ENCODE measurements at regions of chr15 and their contacts with region 1.

Region 1: DNA sequence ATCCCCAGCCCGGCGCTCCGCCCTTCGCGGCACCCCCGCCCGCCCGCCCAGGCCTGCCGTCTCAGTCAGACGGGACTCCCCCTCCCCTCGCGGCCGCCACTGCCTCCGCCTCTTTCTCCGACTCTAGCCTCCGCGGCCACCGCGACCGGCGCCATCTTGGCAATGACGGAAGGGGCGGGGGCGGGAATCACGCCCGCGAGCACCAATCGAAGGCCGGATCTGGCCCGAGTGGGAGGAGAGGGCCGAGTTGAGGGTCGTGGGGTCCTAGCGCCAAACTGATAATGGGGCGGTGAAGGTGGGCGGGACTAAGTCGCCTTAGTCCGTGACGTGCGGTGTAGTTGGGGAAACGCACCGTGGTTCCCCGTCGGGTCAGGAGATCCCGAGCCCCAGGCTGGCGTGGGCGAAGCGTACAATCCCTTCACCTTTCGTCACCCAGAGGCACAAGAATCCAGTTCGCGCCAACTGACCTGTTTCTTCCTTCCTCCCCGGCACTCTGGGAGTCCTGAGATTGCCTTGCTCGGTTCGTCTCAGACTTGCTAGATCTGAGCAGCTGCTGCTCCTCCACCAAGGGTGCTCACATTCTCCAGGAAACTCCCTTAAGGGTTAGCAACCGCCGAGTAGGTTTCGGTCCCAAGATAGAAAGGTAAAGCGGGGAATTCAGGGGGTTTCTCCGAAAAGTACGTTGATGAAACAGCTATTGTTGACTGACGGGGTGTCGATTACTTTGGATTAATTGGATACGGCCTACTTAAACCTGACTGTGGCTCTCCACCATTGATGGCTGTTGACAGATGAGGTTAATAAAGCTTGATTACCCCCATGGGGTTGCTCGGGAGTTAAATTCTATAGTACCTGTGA is at the start of gene DENND4A:
- DNase-seq: peak; percentile 86 to 97
- H3K4me3 ChIP-seq: peak within 1 kb of the TSS; percentile 86
- H3K27ac ChIP-seq: peak within 1 kb of the TSS; percentile 77
- H3K4me1 ChIP-seq: peaks cover 41% of the 10 kb centered on the region
- H3K27me3 ChIP-seq: no peaks in the 10 kb centered on the region
- CTCF ChIP-seq: no peak
- total RNA-seq, gene DENND4A: 12.6 and 16.3 TPM in 2 replicates

Region 2: DNA sequence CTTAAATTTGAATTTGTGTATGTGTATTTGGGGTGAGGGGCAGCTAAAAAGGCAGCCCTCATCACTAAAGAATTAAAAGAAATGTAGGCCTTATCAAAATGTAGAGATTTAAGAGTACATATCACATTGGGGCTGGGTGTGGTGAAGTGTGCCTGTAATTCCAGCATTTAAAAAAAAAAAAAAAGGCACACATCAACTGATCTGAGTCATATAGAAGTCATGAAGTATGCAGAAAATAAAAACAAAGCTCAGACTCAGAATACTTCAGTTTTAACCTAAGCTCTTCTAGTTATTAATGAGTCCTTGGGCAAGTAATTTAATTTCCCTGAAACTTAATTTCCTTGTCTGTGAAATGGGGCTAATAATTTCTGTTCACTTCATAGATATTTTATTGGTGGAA is 139.0 kb before region 1 on chr15:
- CTCF ChIA-PET with region 1: no interaction called
- POLR2A ChIA-PET with region 1: interaction called, 16 read pairs
- intact Hi-C with region 1: no loop called
- DNase-seq: peak in 1 of 2 experiments; percentile 39
- H3K4me3 ChIP-seq: no peak overlapping the region
- H3K27ac ChIP-seq: no peak overlapping the region
- H3K4me1 ChIP-seq: peaks cover 9% of the 10 kb centered on the region; the same call in 1 of the 2 replicates
- H3K27me3 ChIP-seq: no peaks in the 10 kb centered on the region
- CTCF ChIP-seq: no peak

Region 3: GRCh38 chr15:65757256-65757655 is 35.1 kb before region 1 on chr15:
- CTCF ChIA-PET with region 1: no interaction called
- POLR2A ChIA-PET with region 1: no interaction called
- intact Hi-C with region 1: no loop called
- DNase-seq: no peak
- H3K4me3 ChIP-seq: no peak overlapping the region
- H3K27ac ChIP-seq: no peak overlapping the region
- H3K4me1 ChIP-seq: no peaks in the 10 kb centered on the region
- H3K27me3 ChIP-seq: no peaks in the 10 kb centered on the region
- CTCF ChIP-seq: no peak

Region 4: GRCh38 chr15:65856821-65857455 is 64.6 kb after region 1 on chr15:
- CTCF ChIA-PET with region 1: no interaction called
- POLR2A ChIA-PET with region 1: no interaction called
- intact Hi-C with region 1: loop called (anchors 5 kb)
- DNase-seq: peak; percentile 44 to 59
- H3K4me3 ChIP-seq: no peak overlapping the region
- H3K27ac ChIP-seq: no peak overlapping the region
- H3K4me1 ChIP-seq: no peaks in the 10 kb centered on the region
- H3K27me3 ChIP-seq: no peaks in the 10 kb centered on the region
- CTCF ChIP-seq: peak; percentile 80

Region 5: DNA sequence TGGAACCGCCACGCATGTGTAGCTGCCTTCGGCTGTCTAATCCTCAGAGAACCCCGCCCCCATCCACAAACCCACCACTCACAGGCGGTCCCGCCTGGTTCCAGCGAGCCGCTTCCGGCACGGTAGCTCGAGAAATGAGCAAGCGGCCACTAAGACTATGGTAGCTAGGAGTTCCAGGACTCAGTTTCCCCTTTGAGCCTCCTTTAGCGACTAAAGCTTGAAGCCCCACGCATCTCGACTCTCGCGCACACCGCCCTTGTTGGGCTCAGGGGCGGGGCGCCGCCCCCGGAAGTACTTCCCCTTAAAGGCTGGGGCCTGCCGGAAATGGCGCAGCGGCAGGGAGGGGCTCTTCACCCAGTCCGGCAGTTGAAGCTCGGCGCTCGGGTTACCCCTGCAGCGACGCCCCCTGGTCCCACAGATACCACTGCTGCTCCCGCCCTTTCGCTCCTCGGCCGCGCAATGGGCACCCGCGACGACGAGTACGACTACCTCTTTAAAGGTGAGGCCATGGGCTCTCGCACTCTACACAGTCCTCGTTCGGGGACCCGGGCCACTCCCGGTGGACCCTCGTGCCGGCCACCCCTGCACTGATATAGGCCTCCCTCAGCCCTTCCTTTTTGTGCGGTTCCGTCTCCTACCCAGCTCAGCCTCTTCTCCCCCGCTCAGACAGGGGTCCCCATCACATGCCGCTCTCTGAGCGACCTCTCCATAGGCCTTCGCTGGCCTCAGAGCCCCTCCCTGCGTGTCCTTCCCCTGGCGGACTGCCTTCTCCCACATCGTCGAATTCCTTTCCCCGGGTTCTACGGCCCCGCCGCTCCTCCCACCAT is 77.0 kb after region 1 on chr15 and contains the start of gene RAB11A:
- CTCF ChIA-PET with region 1: interaction called, 7 read pairs
- POLR2A ChIA-PET with region 1: no interaction called
- intact Hi-C with region 1: loop called (anchors 1 kb)
- DNase-seq: peak; percentile 88 to 94
- H3K4me3 ChIP-seq: peak within 1 kb of the TSS; percentile 96
- H3K27ac ChIP-seq: peak within 1 kb of the TSS; percentile 85
- H3K4me1 ChIP-seq: peaks cover 21% of the 10 kb centered on the region; the same call in 1 of the 2 replicates
- H3K27me3 ChIP-seq: no peaks in the 10 kb centered on the region
- CTCF ChIP-seq: no peak; the same call in 1 of the 2 replicates
- total RNA-seq, gene RAB11A: 186 and 233 TPM in 2 replicates

Measured in PC-9 (cell line).